ENCODE measurements at regions of chr7 and their contacts with region 1.

Region 1: DNA sequence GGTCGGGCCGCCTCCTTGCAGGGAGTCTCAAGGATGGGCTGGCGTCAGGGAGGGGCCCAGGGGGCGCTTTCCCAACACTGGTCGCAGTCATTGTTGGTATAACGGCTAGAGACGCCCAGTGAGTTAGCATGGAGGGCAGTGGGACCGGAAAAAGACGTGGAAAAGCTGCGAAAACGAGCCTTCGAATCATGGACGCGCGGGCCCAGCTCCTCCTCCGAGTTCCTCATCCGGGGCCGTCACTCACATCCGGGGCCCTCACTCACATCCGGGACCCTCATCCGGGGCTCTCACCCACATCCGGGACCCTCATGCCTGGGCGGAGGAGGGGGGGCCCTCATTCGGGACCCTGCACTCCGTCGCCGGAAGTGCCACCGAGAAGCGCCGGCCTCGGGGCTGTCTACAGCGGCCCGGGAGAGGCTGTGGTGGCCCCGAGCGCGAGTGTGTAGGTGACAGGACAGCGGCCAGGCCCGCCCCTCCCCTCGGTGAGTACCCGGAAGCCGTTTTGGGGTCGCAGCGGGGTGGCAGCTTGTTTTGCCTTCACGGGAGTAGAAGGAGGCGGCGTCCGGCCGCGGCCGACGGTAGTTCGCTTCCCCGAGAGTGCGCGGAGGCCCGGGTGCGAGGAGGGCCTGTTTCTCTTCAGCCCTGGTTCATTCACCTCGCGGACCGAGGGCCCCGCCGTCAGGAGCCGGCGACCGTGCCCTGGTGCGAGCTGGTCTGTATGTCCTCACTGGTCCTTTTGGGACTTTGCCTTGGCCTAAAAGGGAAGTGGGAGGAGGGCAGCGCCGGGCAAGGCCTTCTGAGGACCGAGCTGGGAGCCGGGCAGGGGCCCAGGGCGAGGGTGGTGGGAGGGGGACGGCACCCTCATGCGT is at the start of gene ZNF655:
- DNase-seq: peak; percentile 92
- H3K4me3 Mint-ChIP-seq: peak within 1 kb of the TSS; percentile 99
- H3K27ac Mint-ChIP-seq: peak within 1 kb of the TSS; percentile 98
- H3K4me1 Mint-ChIP-seq: peaks cover 49% of the 10 kb centered on the region
- H3K27me3 Mint-ChIP-seq: no peaks in the 10 kb centered on the region
- total RNA-seq, gene ZNF655: 102 to 103 TPM

Region 2: GRCh38 chr7:99357701-99358490 is 200.6 kb before region 1 on chr7:
- CTCF ChIA-PET with region 1: no interaction called
- POLR2A ChIA-PET with region 1: no interaction called
- DNase-seq: no peak
- H3K4me3 Mint-ChIP-seq: no peak overlapping the region
- H3K27ac Mint-ChIP-seq: no peak overlapping the region
- H3K4me1 Mint-ChIP-seq: no peaks in the 10 kb centered on the region
- H3K27me3 Mint-ChIP-seq: no peaks in the 10 kb centered on the region

Region 3: DNA sequence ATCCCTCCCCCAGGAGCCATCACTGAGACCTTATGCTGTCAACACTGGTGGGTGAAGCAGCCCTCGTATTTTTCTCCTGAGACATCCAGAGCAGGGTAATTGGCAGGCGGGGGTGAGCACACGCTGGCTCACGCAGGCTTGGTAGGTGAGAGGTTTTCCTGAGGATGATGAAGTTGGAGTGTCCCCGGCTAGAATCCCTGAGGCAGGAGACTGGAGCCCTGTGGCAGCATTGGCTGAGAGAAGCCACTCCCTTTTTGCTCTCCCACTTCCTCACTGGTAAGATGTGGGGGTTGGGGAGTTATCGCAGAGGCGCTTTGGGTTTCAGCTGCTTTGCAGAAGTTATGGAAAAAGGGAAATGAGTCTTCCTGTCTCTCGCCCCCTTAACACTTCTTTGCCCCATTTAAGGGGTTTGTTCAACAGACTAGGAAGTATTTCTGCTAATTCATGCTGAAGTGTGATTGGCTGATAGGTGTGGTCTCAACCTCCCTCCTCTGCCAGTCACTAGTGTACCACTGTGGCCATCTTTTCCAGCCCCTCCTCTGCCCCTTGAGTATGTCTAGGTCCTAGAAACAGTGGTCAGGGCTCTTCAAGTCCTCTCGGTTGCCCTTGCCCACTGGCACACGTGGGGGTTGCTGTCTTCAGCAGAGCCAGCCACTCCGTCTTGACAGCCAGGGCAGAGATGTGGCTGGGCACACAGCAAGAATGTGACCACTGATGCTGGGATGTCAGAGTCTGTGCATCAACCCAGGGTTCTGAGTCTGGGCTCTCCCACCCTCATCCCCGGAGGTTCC is 178.3 kb before region 1 on chr7:
- CTCF ChIA-PET with region 1: no interaction called
- POLR2A ChIA-PET with region 1: interaction called, 11 read pairs
- DNase-seq: peak; percentile 54
- H3K4me3 Mint-ChIP-seq: peak overlapping the region; percentile 77
- H3K27ac Mint-ChIP-seq: peak overlapping the region; percentile 97
- H3K4me1 Mint-ChIP-seq: peaks cover 63% of the 10 kb centered on the region
- H3K27me3 Mint-ChIP-seq: no peaks in the 10 kb centered on the region

Region 4: DNA sequence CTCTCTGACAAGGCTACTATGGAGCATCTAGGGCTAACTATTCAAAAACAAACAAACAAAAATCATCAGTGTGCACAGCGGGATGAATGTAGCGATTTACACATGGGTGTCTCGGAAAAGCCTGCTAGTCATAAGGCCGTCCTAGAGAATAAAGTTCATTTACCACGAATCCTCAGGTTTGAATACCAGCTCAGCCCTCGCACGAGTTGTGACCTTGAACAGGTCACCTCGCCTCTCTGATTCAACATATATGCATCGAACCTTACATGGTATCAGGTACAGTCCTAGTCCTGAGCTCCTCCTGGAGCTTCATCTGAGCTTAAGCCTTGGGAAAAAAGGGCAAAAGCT is 93.1 kb before region 1 on chr7:
- CTCF ChIA-PET with region 1: no interaction called
- POLR2A ChIA-PET with region 1: interaction called, 13 read pairs
- DNase-seq: no peak
- H3K4me3 Mint-ChIP-seq: peak overlapping the region; percentile 86
- H3K27ac Mint-ChIP-seq: peak overlapping the region; percentile 73
- H3K4me1 Mint-ChIP-seq: peaks cover 30% of the 10 kb centered on the region
- H3K27me3 Mint-ChIP-seq: no peaks in the 10 kb centered on the region

Region 5: DNA sequence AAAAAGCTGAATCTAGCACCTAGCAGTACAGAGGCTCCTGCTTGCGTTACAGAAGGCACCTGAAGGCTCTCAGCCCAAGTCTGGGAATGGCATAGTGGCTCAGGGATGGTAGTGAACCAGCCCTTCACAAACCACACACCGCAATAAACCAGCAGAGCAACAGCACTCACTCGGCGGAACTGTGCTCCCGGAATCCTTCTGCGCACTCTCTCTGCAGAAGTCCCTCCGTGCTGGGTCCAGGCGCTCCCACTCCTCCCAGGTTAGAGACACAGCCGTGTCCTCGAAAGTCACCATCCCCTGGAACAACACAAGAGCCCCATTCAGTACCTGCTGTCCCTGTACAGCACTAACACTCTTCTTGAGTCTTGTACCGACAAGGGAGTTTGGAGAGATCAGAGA is 60.0 kb before region 1 on chr7:
- CTCF ChIA-PET with region 1: interaction called, 4 read pairs
- POLR2A ChIA-PET with region 1: interaction called, 79 read pairs
- DNase-seq: no peak
- H3K4me3 Mint-ChIP-seq: peak overlapping the region; percentile 92
- H3K27ac Mint-ChIP-seq: peak overlapping the region; percentile 98
- H3K4me1 Mint-ChIP-seq: peaks cover 26% of the 10 kb centered on the region
- H3K27me3 Mint-ChIP-seq: no peaks in the 10 kb centered on the region

Region 6: GRCh38 chr7:99579956-99580777 is 21.6 kb after region 1 on chr7:
- CTCF ChIA-PET with region 1: no interaction called
- POLR2A ChIA-PET with region 1: interaction called, 11 read pairs
- DNase-seq: peak; percentile 34
- H3K4me3 Mint-ChIP-seq: peak overlapping the region; percentile 76
- H3K27ac Mint-ChIP-seq: no peak overlapping the region
- H3K4me1 Mint-ChIP-seq: peaks cover 20% of the 10 kb centered on the region
- H3K27me3 Mint-ChIP-seq: peaks cover 2% of the 10 kb centered on the region

Region 7: GRCh38 chr7:99624484-99624883 is 65.9 kb after region 1 on chr7:
- CTCF ChIA-PET with region 1: no interaction called
- POLR2A ChIA-PET with region 1: interaction called, 19 read pairs
- DNase-seq: peak; percentile 83
- H3K4me3 Mint-ChIP-seq: peak overlapping the region; percentile 73
- H3K27ac Mint-ChIP-seq: peak overlapping the region; percentile 85
- H3K4me1 Mint-ChIP-seq: peaks cover 56% of the 10 kb centered on the region
- H3K27me3 Mint-ChIP-seq: no peaks in the 10 kb centered on the region

Region 8: DNA sequence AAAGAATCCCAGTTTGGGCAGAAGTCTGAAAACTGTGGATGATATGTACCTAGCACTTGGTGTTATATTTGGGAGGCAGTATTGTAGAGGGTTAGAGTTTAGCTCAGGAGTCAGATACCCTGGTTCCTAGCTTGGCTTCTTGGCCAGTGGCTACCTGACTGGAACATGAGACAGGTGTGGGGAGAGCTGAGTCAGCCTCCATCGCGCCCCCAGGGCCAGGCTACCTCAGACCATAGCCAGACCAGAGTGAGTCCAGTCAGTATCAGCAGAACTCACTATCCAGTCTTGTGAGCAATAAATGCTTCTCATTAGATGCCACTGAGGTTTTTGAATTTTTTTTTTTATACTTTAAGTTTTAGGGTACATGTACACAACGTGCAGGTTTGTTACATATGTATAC is 95.2 kb after region 1 on chr7:
- CTCF ChIA-PET with region 1: no interaction called
- POLR2A ChIA-PET with region 1: no interaction called
- DNase-seq: no peak
- H3K4me3 Mint-ChIP-seq: no peak overlapping the region
- H3K27ac Mint-ChIP-seq: no peak overlapping the region
- H3K4me1 Mint-ChIP-seq: peaks cover 3% of the 10 kb centered on the region
- H3K27me3 Mint-ChIP-seq: no peaks in the 10 kb centered on the region

Region 9: DNA sequence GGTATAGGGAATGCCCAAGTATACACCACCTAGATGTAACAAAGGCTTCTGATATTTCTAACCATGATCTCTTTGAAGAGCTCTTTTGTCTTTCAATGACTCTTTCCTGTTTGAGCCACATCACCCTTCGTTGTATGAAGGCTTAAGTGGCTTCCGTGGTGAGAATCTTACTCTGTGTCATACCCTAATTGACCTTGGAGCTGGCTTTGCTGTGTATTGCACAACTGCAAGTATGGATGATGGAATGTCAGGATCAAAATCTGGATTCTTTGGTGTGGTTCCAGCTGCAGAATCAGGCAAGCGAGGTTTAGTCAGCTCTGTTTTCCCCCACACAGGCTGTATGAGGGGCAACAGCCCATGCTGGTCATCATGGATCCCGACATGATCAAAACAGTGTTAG is 285.3 kb after region 1 on chr7:
- CTCF ChIA-PET with region 1: no interaction called
- POLR2A ChIA-PET with region 1: no interaction called
- DNase-seq: no peak
- H3K4me3 Mint-ChIP-seq: no peak overlapping the region
- H3K27ac Mint-ChIP-seq: no peak overlapping the region
- H3K4me1 Mint-ChIP-seq: no peaks in the 10 kb centered on the region
- H3K27me3 Mint-ChIP-seq: peaks cover 20% of the 10 kb centered on the region

Region 10: DNA sequence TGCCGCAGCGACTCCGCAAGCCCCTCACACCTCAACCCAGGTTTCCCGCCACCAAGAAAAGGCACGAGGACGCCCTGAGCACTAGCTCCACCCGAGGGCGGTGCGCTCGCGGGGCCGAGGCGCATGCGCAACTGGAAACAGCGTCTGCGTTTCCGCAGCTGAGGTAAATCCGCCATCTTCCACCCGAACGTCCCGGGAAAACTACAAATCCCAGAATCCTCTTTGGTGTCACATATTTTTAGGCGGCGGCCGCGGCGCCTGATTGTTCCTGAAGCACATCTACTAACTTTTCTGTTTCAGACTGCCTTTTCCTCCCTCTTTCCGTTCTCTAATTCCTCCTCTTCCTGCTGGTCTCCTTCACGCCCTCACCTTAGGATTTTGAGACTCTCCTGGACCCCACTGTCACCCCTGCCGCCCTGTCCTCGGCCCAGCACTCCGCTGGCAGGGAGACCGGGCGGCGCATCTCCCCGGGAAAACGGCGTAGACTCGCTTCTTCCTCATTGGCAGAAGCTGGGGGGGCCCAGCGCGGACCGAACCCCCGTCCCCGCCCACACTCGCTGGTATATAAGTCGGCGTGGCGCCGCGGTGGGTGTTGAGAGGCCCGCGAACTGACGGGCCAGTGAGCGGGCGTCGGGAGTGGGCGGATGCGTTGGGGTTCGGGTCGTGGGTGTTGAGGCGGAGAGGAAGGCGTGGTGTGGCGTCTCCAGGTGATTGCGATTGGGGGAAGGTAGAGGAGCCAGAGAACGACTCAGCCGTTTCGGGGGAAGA is 869.8 kb after region 1 on chr7 and contains the start of gene ZCWPW1:
- CTCF ChIA-PET with region 1: no interaction called
- POLR2A ChIA-PET with region 1: interaction called, 12 read pairs
- DNase-seq: peak; percentile 96
- H3K4me3 Mint-ChIP-seq: peak within 1 kb of the TSS; percentile 92
- H3K27ac Mint-ChIP-seq: peak within 1 kb of the TSS; percentile 100
- H3K4me1 Mint-ChIP-seq: peaks cover 46% of the 10 kb centered on the region
- H3K27me3 Mint-ChIP-seq: peaks cover 3% of the 10 kb centered on the region
- total RNA-seq, gene ZCWPW1: 2.7 to 3.0 TPM

Measured in activated CD4-positive, alpha-beta memory T cell treated with anti-CD3 and anti-CD28 coated beads, Interleukin-2, amount 10 ng/mL, durations not matched to agents 7 days and 5 days (primary cell).